Transverse colon (tissue), 4 donors: ENCODE measurements at regions of chr6 and their contacts with region 1.

Region 1: DNA sequence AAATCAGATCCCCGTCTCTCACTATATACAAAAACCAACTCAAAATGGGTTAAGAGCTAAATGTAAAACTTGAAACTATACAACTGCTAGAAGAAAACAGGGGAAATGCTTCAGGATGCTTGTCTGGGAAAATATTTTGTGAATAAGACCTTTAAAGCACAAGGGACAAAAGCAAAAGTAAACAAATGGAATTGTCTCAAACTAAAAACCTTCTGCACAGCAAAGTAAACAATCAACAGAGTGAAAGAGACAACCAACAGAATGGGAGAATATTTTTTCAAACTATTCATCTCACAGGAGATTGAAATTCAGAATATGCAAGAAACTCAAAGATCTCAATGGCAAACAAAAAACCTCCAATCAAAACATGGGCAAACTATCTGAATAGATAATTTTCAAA is 165.6 kb upstream of the AHI1 start:
- DNase-seq: no peak
- H3K4me3 ChIP-seq: no peak overlapping the region
- H3K27ac ChIP-seq: no peak overlapping the region
- H3K4me1 ChIP-seq: peaks cover 0 to 2% (median 0%) of the 10 kb centered on the region in 4 donors
- H3K27me3 ChIP-seq: no peaks in the 10 kb centered on the region
- CTCF ChIP-seq: no peak
- EP300 ChIP-seq: no peak
- POLR2A ChIP-seq: no peak

Region 2: GRCh38 chr6:135707426-135707825 is 44.3 kb after region 1 on chr6:
- in situ Hi-C with region 1: no loop called
- intact Hi-C with region 1: loop called (anchors 5 kb)
- DNase-seq: no peak
- H3K4me3 ChIP-seq: no peak overlapping the region
- H3K27ac ChIP-seq: no peak overlapping the region
- H3K4me1 ChIP-seq: no peaks in the 10 kb centered on the region
- H3K27me3 ChIP-seq: no peaks in the 10 kb centered on the region
- CTCF ChIP-seq: no peak
- EP300 ChIP-seq: no peak
- POLR2A ChIP-seq: no peak

Region 3: GRCh38 chr6:136208783-136209182 is 545.7 kb after region 1 on chr6:
- in situ Hi-C with region 1: no loop called
- intact Hi-C with region 1: loop called (anchors 5 kb)
- DNase-seq: no peak
- H3K4me3 ChIP-seq: no peak overlapping the region
- H3K27ac ChIP-seq: no peak overlapping the region
- H3K4me1 ChIP-seq: no peaks in the 10 kb centered on the region
- H3K27me3 ChIP-seq: no peaks in the 10 kb centered on the region
- CTCF ChIP-seq: no peak
- EP300 ChIP-seq: no peak
- POLR2A ChIP-seq: no peak